Heart right ventricle (tissue), 16 donors: ENCODE measurements at regions of chr11 and their contacts with region 1.

Region 1: DNA sequence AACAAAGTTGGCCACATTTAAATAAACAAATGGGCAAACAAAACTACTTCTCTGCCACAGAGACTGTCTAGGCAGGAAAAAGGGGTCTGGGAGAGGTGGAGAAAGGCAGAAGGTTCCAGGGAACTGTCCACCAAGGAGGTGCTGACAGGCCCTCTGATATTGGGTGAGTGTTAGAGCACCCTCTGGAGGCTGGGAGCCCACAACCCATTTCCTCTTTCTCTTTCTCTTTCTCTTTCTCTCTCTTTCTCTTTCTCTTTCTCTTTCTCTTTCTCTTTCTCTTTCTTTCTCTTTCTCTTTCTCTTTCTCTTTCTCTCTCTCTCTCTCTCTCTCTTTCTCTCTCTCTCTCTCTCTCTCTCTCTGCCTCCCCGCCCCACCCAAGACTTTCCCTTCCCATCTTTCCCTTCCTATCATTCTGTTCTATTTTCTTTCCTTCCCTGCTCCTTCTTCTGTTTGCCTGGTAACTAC is 912.8 kb downstream of the DLG2 start:
- DNase-seq: peak; percentile 23 to 34
- ATAC-seq: peak in 2 of 8 donors; percentile 63 to 74
- H3K4me3 ChIP-seq: no peak overlapping the region
- H3K27ac ChIP-seq: no peak overlapping the region
- H3K4me1 ChIP-seq: no peaks in the 10 kb centered on the region
- H3K27me3 ChIP-seq: no peaks in the 10 kb centered on the region
- CTCF ChIP-seq: peak in 7 of 9 donors; percentile 26 to 53 (median 46)

Region 2: DNA sequence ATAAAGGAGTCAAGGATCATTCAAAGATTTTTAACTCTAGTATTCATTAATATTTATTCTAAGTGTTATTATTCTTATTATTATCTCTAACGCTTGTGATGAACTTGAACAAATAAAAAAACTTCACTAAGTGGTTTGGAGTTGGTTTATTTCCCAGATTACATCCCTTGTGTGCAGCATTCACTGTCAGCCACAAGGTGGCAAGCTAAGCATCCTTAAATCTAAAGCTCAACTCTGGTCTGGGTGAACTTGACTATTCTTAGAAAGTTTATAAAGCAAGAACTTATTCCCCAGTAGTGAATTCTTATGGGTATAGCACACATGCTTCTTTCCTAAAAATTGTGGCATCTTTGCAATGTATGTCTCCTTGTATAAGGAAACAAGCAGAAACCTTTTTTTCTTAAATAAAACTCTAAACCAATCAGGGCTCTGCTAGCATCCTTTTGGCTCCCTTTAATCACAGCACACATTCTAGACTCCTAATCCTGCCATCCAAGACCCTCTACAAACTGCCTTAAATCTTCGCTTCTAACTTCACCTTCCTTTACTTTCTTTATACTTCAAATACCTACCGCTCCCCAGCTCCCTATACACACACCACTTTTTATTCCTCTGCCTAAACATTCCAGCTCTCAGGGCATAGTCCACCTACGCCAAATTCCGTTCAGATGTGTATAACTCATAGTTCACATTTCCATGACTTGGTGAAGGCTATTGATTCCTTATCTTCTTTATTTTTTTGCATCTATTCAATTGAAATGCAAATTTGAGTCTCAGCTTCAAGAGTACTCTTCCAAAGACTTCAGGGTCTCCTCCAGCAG is 156.1 kb before region 1 on chr11:
- intact Hi-C with region 1: loop called in 8 of 10 experiments (anchors 2 to 10 kb)
- DNase-seq: peak in 1 of 2 donors; percentile 6
- ATAC-seq: peak in 4 of 8 donors; percentile 46 to 67 (median 52)
- H3K4me3 ChIP-seq: no peak overlapping the region
- H3K27ac ChIP-seq: no peak overlapping the region
- H3K4me1 ChIP-seq: no peaks in the 10 kb centered on the region
- H3K27me3 ChIP-seq: no peaks in the 10 kb centered on the region
- CTCF ChIP-seq: peak; percentile 38 to 86 (median 80)

Region 3: DNA sequence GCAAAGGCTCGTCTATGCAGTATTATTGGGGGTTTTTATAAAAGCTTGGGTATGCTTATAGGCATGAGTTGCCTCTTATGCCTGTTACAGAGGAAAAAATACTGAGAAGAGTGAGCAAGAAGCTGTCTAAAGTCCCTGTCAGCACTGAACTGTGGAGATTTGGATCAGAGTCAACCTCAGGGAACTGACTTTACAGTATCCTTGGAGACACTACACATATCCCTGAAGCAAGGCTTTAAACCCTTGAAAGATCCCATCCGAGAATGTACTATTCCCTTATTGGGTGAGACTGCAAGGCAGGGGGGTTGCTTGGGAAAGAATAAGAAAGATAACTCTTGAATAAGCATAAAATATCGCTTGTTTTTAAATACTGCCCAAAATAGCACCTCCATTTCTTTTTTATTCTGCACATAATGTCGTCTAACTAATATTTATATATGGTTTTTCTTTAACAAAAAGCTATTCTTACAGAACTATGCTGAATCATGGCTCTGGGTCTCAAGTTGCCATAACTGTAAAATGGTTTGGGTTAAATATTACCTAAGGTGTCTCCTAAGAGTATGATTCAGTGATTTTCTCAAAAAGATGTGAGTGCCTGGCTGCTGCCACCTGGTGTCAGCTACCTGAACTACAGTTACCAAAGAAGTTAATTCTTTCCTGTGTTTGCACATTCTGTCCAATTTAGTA is 150.0 kb before region 1 on chr11:
- intact Hi-C with region 1: loop called in 8 of 10 experiments (anchors 2 to 10 kb)
- DNase-seq: no peak
- ATAC-seq: no peak
- H3K4me3 ChIP-seq: no peak overlapping the region
- H3K27ac ChIP-seq: no peak overlapping the region
- H3K4me1 ChIP-seq: no peaks in the 10 kb centered on the region
- H3K27me3 ChIP-seq: no peaks in the 10 kb centered on the region
- CTCF ChIP-seq: peak; percentile 43 to 84 (median 78)